OCI-LY7 (cell line): ENCODE measurements at regions of chr7 and their contacts with region 1.

Region 1: DNA sequence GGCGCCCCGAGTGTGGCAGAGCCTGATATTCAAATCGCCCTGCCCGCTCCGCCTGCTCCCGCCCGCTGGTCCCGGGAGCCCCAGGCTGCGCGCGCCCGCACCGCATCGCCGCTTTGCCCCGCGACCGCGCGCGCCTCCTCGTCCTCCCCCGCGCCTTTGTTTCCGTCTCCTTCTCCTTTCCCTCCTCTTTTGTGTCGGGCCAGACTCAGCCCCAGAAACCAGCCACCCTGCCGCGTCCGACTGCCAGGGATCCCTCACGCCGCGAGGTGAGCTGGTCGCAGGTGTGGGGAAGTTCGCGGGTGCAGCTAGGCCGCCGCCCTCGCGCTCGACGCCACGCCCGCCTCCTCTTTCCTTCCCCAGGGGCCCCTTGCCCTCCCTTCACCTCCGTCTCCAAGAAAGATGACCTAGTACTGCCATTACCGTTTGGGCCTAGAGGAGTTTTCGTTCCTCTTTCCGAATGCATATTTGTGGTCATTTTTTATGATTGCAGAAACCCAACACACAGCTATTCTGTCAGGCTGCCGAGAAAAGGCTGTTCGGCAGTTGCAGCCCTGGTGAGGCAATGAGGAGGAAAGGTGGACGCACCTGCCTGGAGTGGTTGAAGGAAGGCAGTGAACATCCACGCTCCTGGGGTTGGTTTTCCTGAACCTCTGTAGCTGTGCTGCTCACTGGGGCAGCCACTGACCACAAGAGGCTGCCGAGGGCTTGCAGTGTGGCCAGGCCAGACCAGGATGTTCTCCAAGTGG is 107.3 kb downstream of the SNX10 start:
- DNase-seq: peak; percentile 94
- H3K4me3 ChIP-seq: peak overlapping the region; percentile 67
- H3K27ac ChIP-seq: peak overlapping the region; percentile 94
- H3K4me1 ChIP-seq: peaks cover 41% of the 10 kb centered on the region
- CTCF ChIP-seq: no peak

Region 2: GRCh38 chr7:25968205-25968993 is 430.5 kb before region 1 on chr7:
- CTCF ChIA-PET with region 1: no interaction called
- POLR2A ChIA-PET with region 1: interaction called, 3 read pairs
- intact Hi-C with region 1: loop called (anchors 2 kb)
- DNase-seq: peak; percentile 97
- H3K4me3 ChIP-seq: peak overlapping the region; percentile 35
- H3K27ac ChIP-seq: peak overlapping the region; percentile 94
- H3K4me1 ChIP-seq: peaks cover 67% of the 10 kb centered on the region
- CTCF ChIP-seq: no peak; the same call in 1 of the 2 replicates

Region 3: GRCh38 chr7:26337232-26337865 is 61.6 kb before region 1 on chr7:
- CTCF ChIA-PET with region 1: no interaction called
- POLR2A ChIA-PET with region 1: no interaction called
- intact Hi-C with region 1: loop called (anchors 2 kb)
- DNase-seq: peak; percentile 56
- H3K4me3 ChIP-seq: peak overlapping the region; percentile 59
- H3K27ac ChIP-seq: peak overlapping the region; percentile 85
- H3K4me1 ChIP-seq: peaks cover 43% of the 10 kb centered on the region
- CTCF ChIP-seq: no peak

Region 4: GRCh38 chr7:26376175-26376917 is 22.6 kb before region 1 on chr7:
- CTCF ChIA-PET with region 1: no interaction called
- POLR2A ChIA-PET with region 1: interaction called, 10 read pairs
- intact Hi-C with region 1: loop called (anchors 2 kb)
- DNase-seq: peak; percentile 37
- H3K4me3 ChIP-seq: peak overlapping the region; percentile 55
- H3K27ac ChIP-seq: no peak overlapping the region
- H3K4me1 ChIP-seq: peaks cover 16% of the 10 kb centered on the region
- CTCF ChIP-seq: no peak

Region 5: GRCh38 chr7:26388256-26388655 is 10.7 kb before region 1 on chr7:
- CTCF ChIA-PET with region 1: no interaction called
- POLR2A ChIA-PET with region 1: interaction called, 12 read pairs
- intact Hi-C with region 1: no loop called
- DNase-seq: no peak
- H3K4me3 ChIP-seq: no peak overlapping the region
- H3K27ac ChIP-seq: no peak overlapping the region
- H3K4me1 ChIP-seq: no peaks in the 10 kb centered on the region
- CTCF ChIP-seq: no peak

Region 6: DNA sequence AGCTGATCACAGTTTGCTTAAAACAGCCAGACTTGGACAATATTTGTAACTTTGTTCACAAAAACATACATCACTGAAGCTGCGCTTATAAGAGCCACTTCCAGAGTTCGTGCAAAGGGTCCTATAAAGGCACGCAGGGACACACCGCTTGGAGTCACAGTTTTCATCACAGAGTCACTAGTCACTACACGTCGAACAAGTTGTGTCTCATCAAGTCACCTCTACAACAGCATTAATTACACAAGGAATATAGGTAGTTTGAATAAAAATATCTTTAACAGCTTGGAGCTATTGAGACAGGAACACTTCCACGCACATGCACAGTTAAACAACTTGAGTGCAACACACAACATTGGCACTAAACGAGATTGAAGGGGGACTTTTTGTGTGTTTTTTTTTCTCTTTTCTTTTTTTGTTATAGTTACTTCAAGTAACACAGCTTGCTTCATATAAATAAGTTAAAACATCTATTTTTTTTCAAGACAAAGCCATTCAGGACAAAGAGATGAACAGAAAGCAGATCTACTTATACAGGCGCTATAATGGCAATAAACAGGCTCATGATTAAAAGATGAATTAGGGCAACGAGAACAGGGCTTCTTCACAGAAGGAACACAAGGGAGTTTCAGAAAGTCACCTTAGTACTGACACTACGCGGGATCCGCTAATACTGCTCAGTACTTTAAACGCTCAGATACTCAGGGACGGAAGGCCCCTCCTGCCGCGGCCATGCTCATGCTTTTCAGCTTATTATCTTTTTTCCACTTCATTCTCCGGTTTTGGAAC is 742.4 kb after region 1 on chr7:
- CTCF ChIA-PET with region 1: no interaction called
- POLR2A ChIA-PET with region 1: interaction called, 10 read pairs
- intact Hi-C with region 1: no loop called
- DNase-seq: no peak
- H3K4me3 ChIP-seq: no peak overlapping the region
- H3K27ac ChIP-seq: no peak overlapping the region
- H3K4me1 ChIP-seq: no peaks in the 10 kb centered on the region
- CTCF ChIP-seq: no peak